Activated CD8-positive, alpha-beta T cell treated with anti-CD3 and anti-CD28 coated beads, Interleukin-2, amount 10 ng/mL, durations not matched to agents 7 days and 5 days (primary cell): ENCODE measurements at regions of chr22 and their contacts with region 1.

Region 1: GRCh38 chr22:28442264-28442710 is 237.4 kb downstream of the TTC28 start:
- DNase-seq: peak; percentile 83
- ATAC-seq: peak; percentile 96
- H3K4me3 Mint-ChIP-seq: peak overlapping the region; percentile 68
- H3K27ac Mint-ChIP-seq: no peak overlapping the region
- H3K4me1 Mint-ChIP-seq: peaks cover 18% of the 10 kb centered on the region
- H3K27me3 Mint-ChIP-seq: peaks cover 29% of the 10 kb centered on the region

Region 2: DNA sequence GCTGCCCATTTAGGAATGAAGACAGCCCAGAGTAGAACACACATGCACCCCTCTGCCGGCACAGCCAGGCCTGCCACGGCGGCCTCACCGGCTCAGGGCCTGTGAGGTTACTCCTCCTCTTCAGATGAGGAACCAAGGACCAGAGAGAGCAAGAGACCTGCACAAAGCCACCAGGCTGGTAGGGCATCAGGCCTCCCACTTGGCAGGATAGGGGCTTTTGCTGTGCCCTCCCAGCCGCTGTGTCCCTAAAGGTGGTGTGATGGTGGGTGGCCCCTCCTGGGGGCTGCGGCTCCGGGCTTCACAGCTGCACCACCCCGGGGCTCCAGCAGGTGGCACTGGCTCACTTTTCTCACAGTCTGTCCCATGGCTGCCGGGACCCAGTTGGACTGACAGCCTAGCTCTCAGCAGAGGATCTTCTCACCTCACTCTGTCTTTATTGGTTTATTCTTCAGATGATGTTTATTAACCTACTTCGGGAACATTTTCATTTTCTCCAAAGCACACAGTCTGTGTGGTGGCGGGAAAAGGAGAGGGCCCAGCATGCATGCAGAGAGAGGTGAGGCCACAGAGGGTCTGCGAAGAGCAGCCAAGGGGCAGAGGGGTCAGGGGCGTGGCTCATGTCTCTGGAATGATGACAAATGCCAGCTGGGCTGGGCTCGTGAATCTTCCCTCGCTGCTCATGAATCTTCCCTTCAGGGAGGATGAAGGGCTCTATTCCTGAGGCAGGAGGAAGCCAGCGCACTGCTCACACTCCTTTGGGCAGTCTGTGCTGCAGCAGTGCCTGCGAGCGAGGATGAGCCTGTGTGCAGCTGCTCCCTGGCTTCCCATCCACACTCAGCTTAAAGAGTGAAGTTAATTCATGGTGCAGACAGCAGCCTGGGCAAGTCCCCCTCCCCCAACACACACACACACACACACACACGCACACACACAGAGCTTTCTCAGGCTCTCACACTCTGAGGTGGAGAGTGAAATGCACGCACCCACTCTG is 422.1 kb before region 1 on chr22:
- CTCF ChIA-PET with region 1: interaction called, 26 read pairs
- POLR2A ChIA-PET with region 1: interaction called, 3 read pairs
- DNase-seq: peak; percentile 73
- ATAC-seq: peak; percentile 84
- H3K4me3 Mint-ChIP-seq: no peak overlapping the region
- H3K27ac Mint-ChIP-seq: no peak overlapping the region
- H3K4me1 Mint-ChIP-seq: peaks cover 13% of the 10 kb centered on the region
- H3K27me3 Mint-ChIP-seq: no peaks in the 10 kb centered on the region

Region 3: DNA sequence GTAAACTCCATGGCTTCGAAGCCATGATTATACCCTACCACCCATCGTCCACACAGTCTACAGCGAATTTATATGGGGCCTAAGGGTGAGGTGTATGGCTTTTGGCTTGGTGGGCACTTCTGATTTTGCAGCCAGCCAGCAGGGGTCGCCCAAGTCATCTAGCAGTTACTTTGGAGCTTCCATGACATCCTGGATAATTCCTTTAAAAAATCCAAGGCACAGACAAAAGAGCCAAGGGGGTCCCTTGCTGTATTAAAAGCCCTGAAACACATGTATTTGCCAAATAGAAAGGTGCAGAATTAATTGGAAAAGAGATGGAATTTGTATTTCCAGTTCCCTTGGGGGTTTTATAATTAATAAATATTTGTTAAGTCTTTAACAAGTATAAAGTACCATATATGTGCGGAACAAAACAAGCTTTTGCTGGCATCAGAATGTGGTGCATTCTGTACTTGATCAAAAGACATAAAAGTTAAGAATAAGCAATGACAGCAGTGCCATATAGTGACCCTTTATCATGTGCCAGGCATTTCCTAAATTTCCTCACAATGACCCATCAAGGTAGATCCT is 390.4 kb before region 1 on chr22:
- CTCF ChIA-PET with region 1: interaction called, 14 read pairs
- POLR2A ChIA-PET with region 1: no interaction called
- DNase-seq: peak; percentile 49
- ATAC-seq: no peak
- H3K4me3 Mint-ChIP-seq: no peak overlapping the region
- H3K27ac Mint-ChIP-seq: no peak overlapping the region
- H3K4me1 Mint-ChIP-seq: no peaks in the 10 kb centered on the region
- H3K27me3 Mint-ChIP-seq: peaks cover 3% of the 10 kb centered on the region

Region 4: DNA sequence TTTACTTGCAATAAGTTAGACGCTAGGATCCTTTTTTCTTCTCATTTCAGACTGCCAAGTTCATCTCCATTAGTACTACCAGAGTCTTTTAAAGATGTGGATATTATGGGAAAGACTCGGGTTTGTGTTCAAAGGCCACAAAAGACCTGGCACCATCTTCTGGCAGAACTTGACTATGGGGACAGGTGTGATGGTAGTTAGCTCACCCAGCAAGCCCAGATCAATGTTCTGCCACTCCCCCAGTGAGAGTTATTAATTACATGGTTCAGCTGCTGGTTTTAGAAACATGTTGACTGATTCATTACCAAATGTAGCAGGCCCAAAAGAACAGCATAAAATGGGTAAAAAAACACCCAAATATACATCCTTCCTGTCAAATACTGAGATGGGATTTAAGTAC is 189.7 kb before region 1 on chr22:
- CTCF ChIA-PET with region 1: interaction called, 11 read pairs
- POLR2A ChIA-PET with region 1: no interaction called
- DNase-seq: no peak
- ATAC-seq: no peak
- H3K4me3 Mint-ChIP-seq: no peak overlapping the region
- H3K27ac Mint-ChIP-seq: no peak overlapping the region
- H3K4me1 Mint-ChIP-seq: no peaks in the 10 kb centered on the region
- H3K27me3 Mint-ChIP-seq: no peaks in the 10 kb centered on the region

Region 5: DNA sequence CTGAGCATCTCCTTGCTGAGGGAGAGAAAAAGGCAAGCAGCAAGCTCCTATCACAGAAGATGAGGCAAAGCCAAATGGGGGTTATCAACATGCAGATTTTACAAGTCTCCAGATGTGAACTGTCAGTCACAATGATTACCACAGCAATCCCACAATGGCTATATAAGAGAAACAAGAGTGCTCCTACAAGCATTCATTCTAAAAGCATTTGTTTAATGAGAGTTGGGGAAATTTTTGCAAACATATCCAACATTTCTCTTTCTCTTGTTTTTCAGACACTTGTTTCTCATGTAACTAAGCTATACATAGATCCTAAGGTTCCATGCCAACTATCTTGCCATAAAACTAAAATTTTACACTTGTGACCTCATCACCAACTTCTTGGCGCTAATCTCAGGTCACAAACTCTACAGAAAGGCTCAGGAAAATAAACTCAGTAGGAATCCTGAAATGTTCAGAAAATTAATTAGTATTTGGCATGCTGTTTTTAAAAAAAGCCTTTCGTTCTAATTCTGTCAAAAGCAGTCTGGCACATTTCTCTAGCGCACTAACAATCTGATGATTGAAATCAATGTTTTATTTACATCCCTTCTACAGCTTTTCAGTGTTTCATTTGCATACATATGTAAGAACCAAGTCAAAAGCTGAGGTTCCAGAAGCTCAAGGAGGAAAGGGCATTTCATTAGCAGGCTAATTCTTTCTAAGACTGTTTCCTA is 37.9 kb after region 1 on chr22:
- CTCF ChIA-PET with region 1: no interaction called
- POLR2A ChIA-PET with region 1: no interaction called
- DNase-seq: no peak
- ATAC-seq: no peak
- H3K4me3 Mint-ChIP-seq: no peak overlapping the region
- H3K27ac Mint-ChIP-seq: no peak overlapping the region
- H3K4me1 Mint-ChIP-seq: no peaks in the 10 kb centered on the region
- H3K27me3 Mint-ChIP-seq: peaks cover 21% of the 10 kb centered on the region

Region 6: DNA sequence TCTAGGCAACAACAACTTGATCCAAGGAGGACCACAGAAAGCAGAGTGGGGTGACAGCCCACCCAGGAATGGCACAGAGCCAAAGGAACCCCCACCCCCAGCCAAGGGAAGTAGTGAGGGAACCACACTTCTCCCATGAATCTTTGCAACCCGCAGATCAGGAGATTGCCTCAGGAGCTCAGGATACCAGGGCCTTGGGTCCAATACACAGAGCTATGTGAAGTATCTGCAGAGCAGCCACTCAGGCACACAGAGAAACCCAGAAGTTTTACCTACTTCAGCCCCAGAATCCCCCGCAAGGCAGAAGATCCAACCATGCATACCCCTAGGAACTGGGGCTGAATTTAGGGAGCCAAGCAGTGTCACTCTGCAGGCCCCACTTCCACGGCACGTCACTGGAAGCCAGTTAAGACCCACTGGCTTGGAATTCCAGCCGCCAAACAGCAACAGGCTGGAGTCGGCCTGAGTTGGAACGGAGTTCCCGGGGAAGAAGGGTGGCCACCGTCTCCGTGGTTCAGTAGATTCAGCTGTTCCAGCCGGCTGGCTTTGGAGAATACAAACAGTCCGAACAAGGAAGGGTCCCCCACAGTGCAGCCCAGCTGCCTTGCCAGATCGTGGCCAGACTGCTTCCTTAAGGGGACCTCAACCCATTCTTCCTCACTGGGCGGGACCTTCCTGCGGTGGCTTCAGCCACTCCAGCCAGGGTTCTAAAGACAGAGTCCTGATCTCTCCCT is 63.3 kb after region 1 on chr22:
- CTCF ChIA-PET with region 1: no interaction called
- POLR2A ChIA-PET with region 1: no interaction called
- DNase-seq: no peak
- ATAC-seq: no peak
- H3K4me3 Mint-ChIP-seq: no peak overlapping the region
- H3K27ac Mint-ChIP-seq: no peak overlapping the region
- H3K4me1 Mint-ChIP-seq: no peaks in the 10 kb centered on the region
- H3K27me3 Mint-ChIP-seq: peaks cover 21% of the 10 kb centered on the region